Vagina (tissue), 2 donors: ENCODE measurements at regions of chr19 and their contacts with region 1.

Region 1: GRCh38 chr19:4811328-4812131 is 20.0 kb downstream of the TICAM1 start:
- DNase-seq: no peak
- H3K4me3 ChIP-seq: no peak overlapping the region
- H3K27ac ChIP-seq: peak overlapping the region; percentile 82
- H3K4me1 ChIP-seq: peaks cover 25% of the 10 kb centered on the region
- H3K27me3 ChIP-seq: no peaks in the 10 kb centered on the region
- CTCF ChIP-seq: peak; percentile 64 to 86 (median 75)
- POLR2A ChIP-seq: no peak

Region 2: DNA sequence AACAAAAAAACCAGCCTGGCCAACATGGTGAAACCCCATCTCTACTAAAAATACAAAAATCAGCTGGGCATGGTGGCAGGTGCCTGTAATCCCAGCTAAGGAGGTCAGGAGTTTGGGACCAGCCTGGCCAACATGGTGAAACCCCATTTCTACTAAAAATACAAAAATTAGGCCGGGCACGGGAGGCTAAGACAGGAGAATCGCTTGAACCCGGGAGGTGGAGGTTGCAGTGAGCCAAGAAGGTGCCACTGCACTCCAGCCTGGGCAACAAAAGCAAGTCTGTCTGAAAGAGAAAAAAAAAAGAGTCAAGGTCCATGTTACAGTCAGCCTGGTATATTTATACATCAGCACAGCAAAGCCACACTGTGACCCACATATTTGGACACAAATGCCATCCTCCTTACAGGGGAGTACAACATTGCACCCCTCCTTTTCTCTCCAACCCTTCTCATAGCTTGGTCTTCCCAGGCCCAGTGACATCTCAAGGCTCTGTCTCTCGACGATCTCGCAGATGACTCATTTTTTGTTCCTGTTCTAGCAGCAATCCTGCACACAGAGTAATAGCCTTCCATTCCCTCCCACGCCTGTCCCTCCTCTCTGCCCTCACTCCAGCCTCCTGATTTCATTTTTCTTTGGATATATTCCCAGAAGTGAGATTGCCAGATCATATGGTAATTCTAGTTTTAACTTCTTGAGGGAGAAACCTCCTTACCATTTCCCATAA is 66.9 kb before region 1 on chr19:
- intact Hi-C with region 1: no loop called
- DNase-seq: no peak
- H3K4me3 ChIP-seq: no peak overlapping the region
- H3K27ac ChIP-seq: peak overlapping the region; percentile 57
- H3K4me1 ChIP-seq: peaks cover 25% of the 10 kb centered on the region
- H3K27me3 ChIP-seq: no peaks in the 10 kb centered on the region
- CTCF ChIP-seq: no peak
- POLR2A ChIP-seq: no peak

Region 3: GRCh38 chr19:4851551-4852290 is 40.2 kb after region 1 on chr19:
- intact Hi-C with region 1: loop called (anchors 5 kb)
- DNase-seq: no peak
- H3K4me3 ChIP-seq: no peak overlapping the region
- H3K27ac ChIP-seq: no peak overlapping the region
- H3K4me1 ChIP-seq: no peaks in the 10 kb centered on the region
- H3K27me3 ChIP-seq: no peaks in the 10 kb centered on the region
- CTCF ChIP-seq: peak; percentile 83 to 90 (median 89)
- POLR2A ChIP-seq: no peak

Region 4: GRCh38 chr19:4909897-4910593 is 98.5 kb after region 1 on chr19:
- intact Hi-C with region 1: loop called (anchors 5 kb)
- DNase-seq: no peak
- H3K4me3 ChIP-seq: peak overlapping the region; percentile 58 to 76
- H3K27ac ChIP-seq: no peak overlapping the region
- H3K4me1 ChIP-seq: peaks cover 42% of the 10 kb centered on the region
- H3K27me3 ChIP-seq: no peaks in the 10 kb centered on the region
- CTCF ChIP-seq: no peak
- POLR2A ChIP-seq: no peak

Region 5: DNA sequence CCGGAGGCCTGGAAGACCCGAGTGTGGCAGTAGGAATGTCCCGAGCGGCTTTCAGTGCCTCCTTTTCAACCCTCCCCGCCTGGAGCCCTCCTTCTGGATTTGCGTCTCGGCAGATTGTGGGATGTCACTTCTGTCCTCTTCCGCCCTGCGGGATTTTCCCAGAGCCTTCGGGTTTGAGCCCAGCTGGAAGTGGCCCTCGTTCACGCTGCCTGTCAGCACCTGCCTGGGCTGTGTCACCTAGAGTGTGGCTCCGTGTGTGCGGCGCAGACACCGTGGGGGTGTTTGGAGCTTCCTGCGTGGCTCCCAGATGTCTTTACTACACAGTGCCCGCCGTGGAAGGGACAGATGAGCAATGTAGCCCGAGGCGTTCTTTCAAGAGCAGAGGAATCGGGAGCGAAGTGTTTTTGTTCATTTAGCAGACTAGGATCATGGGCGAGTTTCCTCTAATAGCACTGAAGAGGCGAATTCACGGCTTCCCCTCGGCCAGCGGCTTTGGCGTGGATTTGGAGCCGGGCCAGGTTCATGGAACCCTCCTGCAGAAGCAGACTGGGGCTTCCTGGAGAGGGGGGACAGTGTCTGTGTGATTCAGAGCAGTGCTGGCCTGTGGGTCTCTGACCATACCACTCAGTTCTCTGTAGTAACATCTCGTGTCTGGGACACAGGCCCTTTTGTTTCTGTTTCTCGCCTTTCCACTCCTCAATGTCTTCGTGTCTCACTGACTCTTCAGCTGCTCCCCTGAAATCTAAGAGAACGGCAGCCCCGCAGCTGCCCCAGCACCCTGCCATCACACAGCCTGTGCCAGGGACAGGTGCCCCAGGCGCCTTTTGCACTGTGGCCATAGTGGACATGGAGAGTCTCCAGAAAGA is 225.4 kb after region 1 on chr19:
- intact Hi-C with region 1: loop called (anchors 2 kb)
- DNase-seq: no peak
- H3K4me3 ChIP-seq: peak overlapping the region; percentile 7 to 15
- H3K27ac ChIP-seq: peak overlapping the region; percentile 53
- H3K4me1 ChIP-seq: peaks cover 60% of the 10 kb centered on the region
- H3K27me3 ChIP-seq: no peaks in the 10 kb centered on the region
- CTCF ChIP-seq: no peak
- POLR2A ChIP-seq: no peak